CD4-positive, alpha-beta T cell (primary cell): ENCODE measurements at regions of chr2 and their contacts with region 1.

Region 1: GRCh38 chr2:55617175-55618024 is at the start of gene PPP4R3B:
- DNase-seq: peak; percentile 97 to 100 (median 98)
- ATAC-seq: peak; percentile 80
- H3K4me3 ChIP-seq: peak within 1 kb of the TSS; percentile 82
- H3K4me3 Mint-ChIP-seq: no peak within 1 kb of the TSS
- H3K27ac ChIP-seq: peak within 1 kb of the TSS; percentile 98 to 99
- H3K27ac Mint-ChIP-seq: no peak within 1 kb of the TSS
- H3K4me1 ChIP-seq: peaks cover 37% of the 10 kb centered on the region
- H3K4me1 Mint-ChIP-seq: peaks cover 61% of the 10 kb centered on the region
- H3K27me3 ChIP-seq: no peaks in the 10 kb centered on the region
- H3K27me3 Mint-ChIP-seq: no peaks in the 10 kb centered on the region
- CTCF ChIP-seq: peak; percentile 35
- total RNA-seq, gene PPP4R3B: 47.7 to 50.3 TPM

Region 2: DNA sequence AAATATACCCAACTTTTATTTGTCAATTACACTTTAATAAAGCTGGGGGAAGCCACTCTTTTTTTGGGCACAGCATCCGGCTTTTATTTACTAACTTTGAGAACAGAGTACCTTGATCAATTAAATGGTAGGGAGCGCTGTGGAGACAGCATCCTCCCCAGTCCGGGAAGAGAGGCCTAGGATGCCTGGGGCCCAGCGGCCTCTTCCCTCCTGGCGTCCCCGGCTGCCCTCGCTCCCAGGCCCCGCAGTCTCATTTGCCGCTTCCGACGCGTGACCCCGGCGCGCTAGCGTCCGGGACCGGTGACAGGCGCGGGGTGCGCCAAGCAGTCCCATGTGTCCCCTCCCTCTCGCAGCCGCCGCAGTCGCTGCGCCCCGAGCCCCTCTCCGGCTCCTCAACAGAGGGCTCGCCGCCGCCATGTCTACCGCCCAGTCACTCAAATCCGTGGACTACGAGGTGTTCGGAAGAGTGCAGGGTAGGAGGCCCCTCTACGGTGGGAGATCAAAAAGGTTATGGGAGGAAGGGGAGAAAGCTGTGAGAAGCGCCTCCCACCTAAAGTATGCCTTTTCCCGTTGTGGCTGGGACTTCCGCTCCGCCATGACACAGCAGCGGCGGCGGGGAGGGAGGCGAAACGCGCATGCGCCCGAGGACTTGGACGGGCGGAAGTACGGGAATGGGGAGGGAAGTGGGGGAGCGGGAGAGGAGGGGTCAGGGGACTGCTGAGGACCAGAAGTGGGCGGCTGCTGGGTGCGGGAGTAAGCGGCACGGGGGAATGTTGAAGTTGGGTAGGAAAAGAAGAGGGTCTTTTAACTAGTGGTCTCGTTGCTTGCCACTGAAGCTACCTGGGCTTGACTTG is 1501.9 kb before region 1 on chr2 and contains the start of gene ACYP2:
- CTCF ChIA-PET with region 1: no interaction called
- POLR2A ChIA-PET with region 1: no interaction called
- intact Hi-C with region 1: loop called in 1 of 2 experiments (anchors 2 kb)
- DNase-seq: peak; percentile 79 to 96 (median 90)
- ATAC-seq: peak; percentile 78
- H3K4me3 ChIP-seq: peak within 1 kb of the TSS; percentile 86
- H3K4me3 Mint-ChIP-seq: peak within 1 kb of the TSS; percentile 92
- H3K27ac ChIP-seq: peak within 1 kb of the TSS; percentile 96 to 98
- H3K27ac Mint-ChIP-seq: peak within 1 kb of the TSS; percentile 99
- H3K4me1 ChIP-seq: peaks cover 11% of the 10 kb centered on the region
- H3K4me1 Mint-ChIP-seq: peaks cover 16% of the 10 kb centered on the region
- H3K27me3 ChIP-seq: no peaks in the 10 kb centered on the region
- H3K27me3 Mint-ChIP-seq: no peaks in the 10 kb centered on the region
- CTCF ChIP-seq: peak; percentile 17
- total RNA-seq, gene ACYP2: 9.3 to 10.9 TPM

Region 3: GRCh38 chr2:55050133-55050994 is 567.0 kb before region 1 on chr2 and contains the start of gene RTN4:
- CTCF ChIA-PET with region 1: no interaction called
- POLR2A ChIA-PET with region 1: interaction called, 6 read pairs
- intact Hi-C with region 1: loop called in 1 of 2 experiments (anchors 10 kb)
- DNase-seq: peak; percentile 94 to 99 (median 98)
- ATAC-seq: peak; percentile 89
- H3K4me3 ChIP-seq: peak within 1 kb of the TSS; percentile 90
- H3K4me3 Mint-ChIP-seq: peak within 1 kb of the TSS; percentile 99
- H3K27ac ChIP-seq: peak within 1 kb of the TSS; percentile 83 to 90
- H3K27ac Mint-ChIP-seq: peak within 1 kb of the TSS; percentile 97
- H3K4me1 ChIP-seq: peaks cover 30% of the 10 kb centered on the region
- H3K4me1 Mint-ChIP-seq: peaks cover 81% of the 10 kb centered on the region
- H3K27me3 ChIP-seq: no peaks in the 10 kb centered on the region
- H3K27me3 Mint-ChIP-seq: no peaks in the 10 kb centered on the region
- CTCF ChIP-seq: no peak
- total RNA-seq, gene RTN4: 84.9 to 85.7 TPM

Region 4: DNA sequence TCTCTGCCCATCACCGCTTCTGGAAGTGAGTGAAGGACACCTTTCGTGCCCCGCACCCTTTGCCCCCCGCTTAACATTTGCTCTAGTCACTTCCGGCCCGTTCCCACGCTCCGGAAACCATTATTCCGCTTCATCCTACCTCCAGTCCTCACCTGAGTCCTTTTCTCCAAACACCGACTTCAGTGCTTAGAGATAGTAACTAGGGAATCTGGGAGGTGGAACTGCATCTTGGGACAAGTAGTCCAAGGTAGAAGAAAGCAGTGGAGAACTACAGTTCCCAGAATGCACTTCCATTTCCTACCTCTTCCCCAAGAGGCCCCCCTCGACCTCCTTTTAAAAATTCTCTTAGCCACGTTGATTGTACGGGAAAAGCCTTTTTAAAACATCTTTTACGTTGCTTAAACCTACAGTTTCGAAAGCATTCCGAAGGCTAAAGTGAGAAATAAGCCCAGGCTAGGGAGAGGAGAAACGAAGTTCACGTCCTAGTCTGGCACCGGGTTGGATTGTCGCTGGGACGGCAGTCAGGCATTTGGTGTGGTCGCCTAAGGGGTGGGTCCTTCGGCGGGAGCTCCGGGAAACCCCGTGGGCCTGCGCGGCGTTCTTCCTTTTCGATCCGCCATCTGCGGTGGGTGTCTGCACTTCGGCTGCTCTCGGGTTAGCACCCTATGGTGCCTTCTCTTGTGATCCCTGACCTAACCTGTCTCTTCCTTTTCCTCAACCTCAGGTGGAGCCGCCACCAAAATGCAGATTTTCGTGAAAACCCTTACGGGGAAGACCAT is 385.1 kb before region 1 on chr2 and contains the starts of genes CLHC1 and RPS27A:
- CTCF ChIA-PET with region 1: no interaction called
- POLR2A ChIA-PET with region 1: interaction called, 24 read pairs
- intact Hi-C with region 1: loop called (anchors 2 to 5 kb)
- DNase-seq: peak; percentile 90 to 96 (median 94)
- ATAC-seq: peak; percentile 87
- H3K4me3 ChIP-seq: peak within 1 kb of the TSS; percentile 77
- H3K4me3 Mint-ChIP-seq: peak within 1 kb of the TSS; percentile 95
- H3K27ac ChIP-seq: peak within 1 kb of the TSS; percentile 97 to 100
- H3K27ac Mint-ChIP-seq: peak within 1 kb of the TSS; percentile 92
- H3K4me1 ChIP-seq: peaks cover 31% of the 10 kb centered on the region
- H3K4me1 Mint-ChIP-seq: peaks cover 81% of the 10 kb centered on the region
- H3K27me3 ChIP-seq: no peaks in the 10 kb centered on the region
- H3K27me3 Mint-ChIP-seq: no peaks in the 10 kb centered on the region
- CTCF ChIP-seq: no peak
- total RNA-seq, gene CLHC1: 4.4 TPM
- total RNA-seq, gene RPS27A: 2,201 to 2,315 TPM

Region 5: DNA sequence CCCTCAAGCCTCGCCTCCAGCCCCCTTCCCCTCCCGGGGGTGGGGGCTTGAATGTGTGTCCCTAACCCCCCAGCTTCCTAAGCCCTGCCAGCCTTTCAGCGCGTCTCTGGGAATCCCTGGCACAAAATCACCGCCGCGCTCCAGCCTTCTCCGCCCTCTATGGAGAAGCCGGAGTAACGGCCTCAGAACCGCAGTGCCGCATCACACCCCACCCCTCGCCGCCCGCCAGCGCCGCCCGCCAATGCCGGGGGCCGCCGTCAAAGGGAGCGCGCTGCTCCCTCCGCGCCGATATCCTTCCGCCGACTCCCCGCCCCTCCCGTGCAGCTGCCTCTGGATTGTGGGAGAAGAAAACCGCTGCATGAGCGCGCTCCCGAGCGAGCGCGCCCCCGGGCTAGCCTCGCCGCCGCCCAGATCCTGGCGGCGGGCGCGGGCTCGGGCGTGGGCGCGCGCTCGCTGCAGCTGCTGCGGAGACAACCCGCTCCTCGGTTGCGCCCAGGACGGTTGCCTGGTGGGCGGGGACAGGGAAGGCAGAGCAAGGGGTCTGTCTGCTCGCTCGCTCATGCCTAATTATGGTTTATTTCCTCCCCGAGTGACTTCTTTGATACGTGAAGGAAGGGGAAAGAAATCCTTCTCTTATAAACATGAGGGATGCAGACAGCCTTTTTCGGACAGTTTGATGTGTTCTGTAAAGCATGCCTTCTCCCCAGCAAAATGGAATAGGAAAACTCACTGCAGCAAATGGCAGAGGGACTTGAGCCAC is 197.5 kb before region 1 on chr2 and contains the start of gene CCDC88A:
- CTCF ChIA-PET with region 1: no interaction called
- POLR2A ChIA-PET with region 1: interaction called, 12 read pairs
- intact Hi-C with region 1: loop called (anchors 5 to 10 kb)
- DNase-seq: peak; percentile 76 to 96 (median 84)
- ATAC-seq: peak; percentile 76
- H3K4me3 ChIP-seq: peak within 1 kb of the TSS; percentile 94
- H3K4me3 Mint-ChIP-seq: peak within 1 kb of the TSS; percentile 95
- H3K27ac ChIP-seq: peak within 1 kb of the TSS; percentile 56 to 81
- H3K27ac Mint-ChIP-seq: peak within 1 kb of the TSS; percentile 79
- H3K4me1 ChIP-seq: peaks cover 12% of the 10 kb centered on the region
- H3K4me1 Mint-ChIP-seq: peaks cover 44% of the 10 kb centered on the region
- H3K27me3 ChIP-seq: no peaks in the 10 kb centered on the region
- H3K27me3 Mint-ChIP-seq: no peaks in the 10 kb centered on the region
- CTCF ChIP-seq: no peak
- total RNA-seq, gene CCDC88A: 11.0 to 12.9 TPM

Region 6: GRCh38 chr2:55530539-55531081 is 86.8 kb before region 1 on chr2:
- CTCF ChIA-PET with region 1: no interaction called
- POLR2A ChIA-PET with region 1: interaction called, 21 read pairs
- intact Hi-C with region 1: no loop called
- DNase-seq: peak in 3 of 14 experiments; percentile 44 to 59 (median 45)
- ATAC-seq: peak; percentile 73
- H3K4me3 ChIP-seq: no peak overlapping the region
- H3K4me3 Mint-ChIP-seq: peak overlapping the region; percentile 28
- H3K27ac ChIP-seq: peak overlapping the region; percentile 51 to 60
- H3K27ac Mint-ChIP-seq: peak overlapping the region; percentile 83
- H3K4me1 ChIP-seq: peaks cover 15% of the 10 kb centered on the region
- H3K4me1 Mint-ChIP-seq: peaks cover 36% of the 10 kb centered on the region
- H3K27me3 ChIP-seq: no peaks in the 10 kb centered on the region
- H3K27me3 Mint-ChIP-seq: no peaks in the 10 kb centered on the region
- CTCF ChIP-seq: no peak

Region 7: GRCh38 chr2:55653251-55653650 is 35.9 kb after region 1 on chr2:
- CTCF ChIA-PET with region 1: no interaction called
- POLR2A ChIA-PET with region 1: no interaction called
- intact Hi-C with region 1: no loop called
- DNase-seq: no peak
- ATAC-seq: no peak
- H3K4me3 ChIP-seq: no peak overlapping the region
- H3K4me3 Mint-ChIP-seq: no peak overlapping the region
- H3K27ac ChIP-seq: no peak overlapping the region
- H3K27ac Mint-ChIP-seq: no peak overlapping the region
- H3K4me1 ChIP-seq: no peaks in the 10 kb centered on the region
- H3K4me1 Mint-ChIP-seq: no peaks in the 10 kb centered on the region
- H3K27me3 ChIP-seq: no peaks in the 10 kb centered on the region
- H3K27me3 Mint-ChIP-seq: no peaks in the 10 kb centered on the region
- CTCF ChIP-seq: no peak

Region 8: DNA sequence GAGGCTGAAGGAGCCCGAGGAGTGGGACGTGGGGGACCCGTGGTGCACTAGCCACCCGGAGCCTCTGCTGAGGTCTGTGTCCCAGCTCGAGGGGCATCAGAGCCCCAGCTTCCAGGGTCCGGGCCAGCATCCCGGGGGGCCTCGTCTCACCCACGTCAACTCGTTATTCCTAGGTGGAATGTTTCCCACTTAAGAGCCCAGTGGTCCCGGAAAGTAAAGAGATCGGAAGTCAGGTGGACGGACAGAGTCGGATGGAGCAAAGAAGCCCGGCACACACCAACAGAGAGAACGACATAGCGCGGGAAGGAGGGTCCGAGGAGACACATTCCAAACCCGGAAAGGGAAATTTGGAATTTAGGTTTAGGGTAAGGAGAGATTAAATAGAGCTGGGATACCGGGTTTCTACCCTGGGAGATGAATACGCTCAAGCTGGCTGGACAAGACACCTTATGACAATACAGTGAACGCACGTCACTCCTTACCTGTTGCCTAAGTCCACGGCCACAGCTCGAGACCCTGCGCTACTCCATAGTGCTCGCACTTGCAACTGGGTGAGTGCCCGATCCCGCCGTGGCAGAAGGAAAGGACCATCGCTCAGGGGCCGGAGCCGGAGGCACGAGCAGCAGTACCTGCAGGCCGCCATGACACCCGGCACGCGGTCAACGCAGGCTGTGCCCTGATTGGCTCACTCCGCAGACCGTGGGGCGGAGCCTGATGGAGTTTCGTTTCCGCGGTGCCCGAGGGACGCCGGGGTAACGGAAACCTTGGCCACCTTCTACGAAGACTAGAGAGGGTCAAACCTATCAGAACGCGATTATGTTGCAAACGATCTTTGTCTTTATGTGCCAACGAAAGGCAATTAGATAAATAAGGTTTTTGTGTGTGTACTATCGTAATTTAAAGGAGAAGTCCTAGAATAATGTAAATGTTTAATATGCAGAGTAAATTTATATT is 76.1 kb after region 1 on chr2 and contains the start of gene PNPT1:
- CTCF ChIA-PET with region 1: interaction called, 3 read pairs
- POLR2A ChIA-PET with region 1: interaction called, 5 read pairs
- intact Hi-C with region 1: loop called in 1 of 2 experiments (anchors 2 kb)
- DNase-seq: peak; percentile 85 to 96 (median 90)
- ATAC-seq: peak; percentile 100
- H3K4me3 ChIP-seq: peak within 1 kb of the TSS; percentile 94
- H3K4me3 Mint-ChIP-seq: peak within 1 kb of the TSS; percentile 94
- H3K27ac ChIP-seq: peak within 1 kb of the TSS; percentile 31 to 37
- H3K27ac Mint-ChIP-seq: peak within 1 kb of the TSS; percentile 92
- H3K4me1 ChIP-seq: peaks cover 10% of the 10 kb centered on the region
- H3K4me1 Mint-ChIP-seq: peaks cover 44% of the 10 kb centered on the region
- H3K27me3 ChIP-seq: no peaks in the 10 kb centered on the region
- H3K27me3 Mint-ChIP-seq: no peaks in the 10 kb centered on the region
- CTCF ChIP-seq: no peak
- total RNA-seq, gene PNPT1: 10.2 to 10.3 TPM